ENCODE measurements at regions of chr2 and their contacts with region 1.

Region 1: DNA sequence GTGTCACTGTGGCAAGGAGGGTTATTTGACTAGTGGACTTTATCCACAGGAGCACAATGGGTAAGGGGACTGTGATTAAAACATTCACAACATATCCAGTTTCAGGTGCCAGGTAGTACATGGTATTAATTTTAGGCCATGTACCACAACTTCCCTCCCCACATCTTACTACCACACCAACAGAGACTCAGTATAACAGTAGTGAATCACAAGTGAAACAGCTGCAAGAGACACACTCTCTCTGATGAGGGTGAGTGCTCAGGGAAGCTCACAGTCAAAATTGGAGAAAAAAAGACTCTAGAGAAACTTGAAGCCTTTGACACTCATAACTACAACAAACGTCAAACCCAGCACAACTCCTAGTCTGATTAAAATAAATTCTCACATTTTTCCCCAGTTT is 367.6 kb upstream of the GYPC start:
- DNase-seq: no peak
- ATAC-seq: no peak
- H3K4me3 ChIP-seq: no peak overlapping the region
- H3K27ac ChIP-seq: no peak overlapping the region
- H3K4me1 ChIP-seq: no peaks in the 10 kb centered on the region
- H3K27me3 ChIP-seq: no peaks in the 10 kb centered on the region
- CTCF ChIP-seq: no peak
- POLR2A ChIP-seq: no peak

Region 2: DNA sequence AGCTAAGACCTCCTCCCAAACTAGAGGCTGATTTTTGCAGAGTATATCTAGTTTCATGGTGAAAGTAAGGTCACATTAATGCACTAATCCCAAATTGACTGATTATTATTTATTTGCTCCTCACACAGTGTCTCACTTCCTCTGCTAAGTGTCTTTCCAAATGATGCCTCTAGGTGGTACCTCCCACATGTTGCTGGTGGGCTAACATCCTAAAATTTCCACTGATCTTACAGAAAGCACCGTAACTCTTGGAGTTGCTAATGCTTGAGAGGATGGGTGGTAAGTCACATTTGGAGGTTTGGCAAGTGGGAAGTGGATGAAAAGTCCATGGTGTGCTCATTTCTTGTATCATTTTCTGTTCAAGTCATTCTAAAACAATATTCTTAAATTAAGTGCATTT is 61.1 kb before region 1 on chr2:
- in situ Hi-C with region 1: no loop called
- intact Hi-C with region 1: no loop called
- DNase-seq: no peak
- ATAC-seq: no peak
- H3K4me3 ChIP-seq: no peak overlapping the region
- H3K27ac ChIP-seq: no peak overlapping the region
- H3K4me1 ChIP-seq: no peaks in the 10 kb centered on the region
- H3K27me3 ChIP-seq: no peaks in the 10 kb centered on the region
- CTCF ChIP-seq: no peak
- POLR2A ChIP-seq: no peak

Region 3: DNA sequence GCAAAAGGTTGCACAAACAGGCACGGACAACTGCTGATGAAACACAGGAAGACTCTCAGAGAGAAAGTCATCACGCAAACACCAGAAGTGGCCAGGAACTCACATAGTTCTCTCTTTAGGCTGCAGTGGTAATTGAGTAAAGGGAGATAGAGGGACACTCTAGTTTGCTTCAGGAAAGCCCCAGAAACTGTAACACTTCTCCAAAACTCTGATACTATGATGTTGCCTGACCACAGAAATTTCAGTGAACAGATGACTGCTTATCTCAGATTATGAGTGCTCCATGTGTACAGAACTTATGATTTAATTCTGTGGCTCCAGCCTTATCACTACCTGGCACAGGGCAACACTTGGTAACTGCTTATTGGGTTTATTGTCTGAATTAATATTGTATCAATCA is 56.1 kb after region 1 on chr2:
- in situ Hi-C with region 1: no loop called
- intact Hi-C with region 1: loop called (anchors 2 kb)
- DNase-seq: no peak
- ATAC-seq: no peak
- H3K4me3 ChIP-seq: no peak overlapping the region
- H3K27ac ChIP-seq: no peak overlapping the region
- H3K4me1 ChIP-seq: no peaks in the 10 kb centered on the region
- H3K27me3 ChIP-seq: no peaks in the 10 kb centered on the region
- CTCF ChIP-seq: no peak
- POLR2A ChIP-seq: no peak

Region 4: DNA sequence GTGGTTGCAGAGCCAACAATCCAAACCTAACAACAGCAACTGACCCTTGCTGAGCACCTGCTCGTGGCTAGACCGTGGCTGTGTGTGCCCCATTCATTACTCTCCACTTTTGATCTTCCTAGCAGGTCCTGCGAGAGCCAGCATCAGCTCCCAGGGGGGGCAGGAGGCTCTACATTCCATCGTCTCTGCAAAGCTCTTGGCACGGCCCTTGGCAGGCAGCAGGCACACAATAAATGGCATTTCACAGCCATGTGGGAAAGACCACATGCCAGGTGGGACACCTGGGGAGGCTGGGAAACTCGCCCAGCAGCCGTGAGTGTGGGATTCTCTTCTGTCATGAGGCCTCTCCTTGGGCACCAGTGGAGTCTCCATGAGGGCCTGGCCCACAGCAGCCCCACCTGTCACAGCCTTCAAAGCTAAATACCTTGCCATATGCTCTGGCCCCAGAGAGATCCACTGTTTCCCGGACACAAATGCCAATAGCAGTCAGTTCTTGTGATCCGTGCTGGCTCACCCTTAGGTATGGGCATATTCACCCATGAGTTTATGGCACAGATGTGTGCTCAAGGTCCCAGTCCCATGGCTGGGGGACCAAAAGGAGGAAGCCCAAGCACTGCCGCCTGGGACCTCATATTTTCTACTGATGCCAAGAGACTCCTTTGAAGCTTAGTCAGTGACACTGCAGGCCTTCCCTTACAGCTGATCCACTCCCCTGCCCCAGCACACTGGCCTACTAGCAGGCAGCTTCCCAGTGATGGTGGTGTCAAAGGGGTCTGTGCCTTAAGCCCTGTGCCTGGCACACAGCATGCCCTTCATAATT is 603.5 kb after region 1 on chr2:
- in situ Hi-C with region 1: no loop called
- intact Hi-C with region 1: no loop called
- DNase-seq: no peak
- ATAC-seq: no peak
- H3K4me3 ChIP-seq: no peak overlapping the region
- H3K27ac ChIP-seq: no peak overlapping the region
- H3K4me1 ChIP-seq: no peaks in the 10 kb centered on the region
- H3K27me3 ChIP-seq: peaks cover 0 to under 1% (median 0%) of the 10 kb centered on the region in 3 donors
- CTCF ChIP-seq: no peak
- POLR2A ChIP-seq: no peak